Left lung (tissue), 14 donors: ENCODE measurements at regions of chr10 and their contacts with region 1.

Region 1: DNA sequence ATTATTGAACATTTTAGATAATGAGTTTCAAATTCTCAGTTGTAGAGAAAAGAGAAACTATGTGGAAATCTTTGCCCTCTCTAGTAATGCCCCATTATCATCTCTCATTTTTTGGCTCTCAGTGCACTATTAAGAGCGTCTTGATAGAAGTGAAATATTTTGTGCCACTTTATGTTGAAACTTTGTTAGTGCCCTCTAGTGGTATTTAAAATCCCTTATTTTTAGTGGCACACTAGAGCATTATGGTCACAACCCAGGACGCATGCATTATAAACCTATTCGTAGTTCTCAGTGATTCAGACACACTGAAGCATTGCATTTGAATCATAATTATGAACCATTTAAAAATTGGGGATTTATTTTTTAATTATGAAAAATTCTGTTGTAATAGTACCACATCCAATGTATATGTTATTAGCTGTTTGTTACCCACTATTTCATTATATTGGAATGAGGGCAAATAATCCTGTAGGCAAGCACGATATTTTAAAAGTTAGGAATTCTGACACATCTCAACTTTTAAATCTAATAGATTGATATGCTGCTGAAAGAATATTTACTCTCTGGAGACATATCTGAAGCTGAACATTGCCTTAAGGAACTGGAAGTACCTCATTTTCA is 21.9 kb downstream of the PDCD4 start:
- DNase-seq: peak in 2 of 4 donors; percentile 33 to 48
- ATAC-seq: peak; percentile 89
- H3K4me3 ChIP-seq: no peak overlapping the region
- H3K27ac ChIP-seq: no peak overlapping the region
- H3K4me1 ChIP-seq: peaks cover 0 to 7% of the 10 kb centered on the region in 2 donors
- H3K27me3 ChIP-seq: no peaks in the 10 kb centered on the region
- CTCF ChIP-seq: peak; percentile 44 to 60

Region 2: GRCh38 chr10:110746254-110746826 is 147.3 kb before region 1 on chr10:
- intact Hi-C with region 1: loop called in 1 of 2 experiments (anchors 5 kb)
- DNase-seq: peak in 3 of 4 donors; percentile 43 to 82 (median 57)
- ATAC-seq: peak; percentile 97
- H3K4me3 ChIP-seq: no peak overlapping the region
- H3K27ac ChIP-seq: no peak overlapping the region
- H3K4me1 ChIP-seq: peaks cover 0 to 7% of the 10 kb centered on the region in 2 donors
- H3K27me3 ChIP-seq: peaks cover 0 to 5% of the 10 kb centered on the region in 2 donors
- CTCF ChIP-seq: peak; percentile 68 to 79

Region 3: GRCh38 chr10:110803830-110804338 is 89.8 kb before region 1 on chr10:
- intact Hi-C with region 1: loop called in 1 of 2 experiments (anchors 10 kb)
- DNase-seq: peak in 2 of 4 donors; percentile 56 to 63
- ATAC-seq: peak; percentile 91
- H3K4me3 ChIP-seq: no peak overlapping the region
- H3K27ac ChIP-seq: no peak overlapping the region
- H3K4me1 ChIP-seq: peaks cover 10 to 20% of the 10 kb centered on the region in 2 donors
- H3K27me3 ChIP-seq: peaks cover 0 to 14% of the 10 kb centered on the region in 2 donors
- CTCF ChIP-seq: peak; percentile 51 to 61

Region 4: GRCh38 chr10:111249925-111250324 is 356.3 kb after region 1 on chr10:
- intact Hi-C with region 1: no loop called
- DNase-seq: no peak
- ATAC-seq: peak; percentile 18
- H3K4me3 ChIP-seq: no peak overlapping the region
- H3K27ac ChIP-seq: no peak overlapping the region
- H3K4me1 ChIP-seq: no peaks in the 10 kb centered on the region
- H3K27me3 ChIP-seq: no peaks in the 10 kb centered on the region
- CTCF ChIP-seq: no peak